Mammary epithelial cell (primary cell): ENCODE measurements at regions of chr6 and their contacts with region 1.

Region 1: GRCh38 chr6:159252955-159253508 is 83.8 kb downstream of the FNDC1 start:
- DNase-seq: peak; percentile 94
- H3K4me3 ChIP-seq: peak overlapping the region; percentile 30 to 41 (median 37)
- H3K27ac ChIP-seq: peak overlapping the region; percentile 21
- H3K4me1 ChIP-seq: peaks cover 4% of the 10 kb centered on the region
- H3K27me3 ChIP-seq: no peaks in the 10 kb centered on the region
- CTCF ChIP-seq: peak; percentile 70 to 80

Region 2: GRCh38 chr6:159311618-159312017 is 58.6 kb after region 1 on chr6:
- CTCF ChIA-PET with region 1: interaction called, 3 read pairs
- dilution Hi-C with region 1: no loop called
- in situ Hi-C with region 1: no loop called
- intact Hi-C with region 1: loop called (anchors 2 kb)
- DNase-seq: peak; percentile 21
- H3K4me3 ChIP-seq: no peak overlapping the region
- H3K27ac ChIP-seq: no peak overlapping the region
- H3K4me1 ChIP-seq: no peaks in the 10 kb centered on the region
- H3K27me3 ChIP-seq: no peaks in the 10 kb centered on the region
- CTCF ChIP-seq: peak; percentile 30 to 33

Region 3: GRCh38 chr6:159470397-159470796 is 217.4 kb after region 1 on chr6:
- CTCF ChIA-PET with region 1: no interaction called
- dilution Hi-C with region 1: no loop called
- in situ Hi-C with region 1: no loop called
- intact Hi-C with region 1: no loop called
- DNase-seq: no peak
- H3K4me3 ChIP-seq: no peak overlapping the region
- H3K27ac ChIP-seq: no peak overlapping the region
- H3K4me1 ChIP-seq: no peaks in the 10 kb centered on the region
- H3K27me3 ChIP-seq: peaks cover 2% of the 10 kb centered on the region
- CTCF ChIP-seq: no peak

Region 4: GRCh38 chr6:159608961-159609651 is 356.1 kb after region 1 on chr6:
- CTCF ChIA-PET with region 1: no interaction called
- dilution Hi-C with region 1: no loop called
- in situ Hi-C with region 1: no loop called
- intact Hi-C with region 1: loop called (anchors 1 kb)
- DNase-seq: peak; percentile 50
- H3K4me3 ChIP-seq: no peak overlapping the region
- H3K27ac ChIP-seq: no peak overlapping the region
- H3K4me1 ChIP-seq: no peaks in the 10 kb centered on the region
- H3K27me3 ChIP-seq: no peaks in the 10 kb centered on the region
- CTCF ChIP-seq: peak; percentile 92 to 98

Region 5: GRCh38 chr6:159654483-159655098 is 401.6 kb after region 1 on chr6:
- CTCF ChIA-PET with region 1: no interaction called
- dilution Hi-C with region 1: no loop called
- in situ Hi-C with region 1: no loop called
- intact Hi-C with region 1: loop called (anchors 10 kb)
- DNase-seq: peak; percentile 24
- H3K4me3 ChIP-seq: no peak overlapping the region
- H3K27ac ChIP-seq: no peak overlapping the region
- H3K4me1 ChIP-seq: no peaks in the 10 kb centered on the region
- H3K27me3 ChIP-seq: no peaks in the 10 kb centered on the region
- CTCF ChIP-seq: peak; percentile 43 to 58